CD14-positive monocyte (primary cell): ENCODE measurements at regions of chr5 and their contacts with region 1.

Region 1: GRCh38 chr5:134533115-134533815 is 7.8 kb downstream of the JADE2 start:
- DNase-seq: peak in 1 of 3 donors; percentile 35
- H3K4me3 ChIP-seq: no peak overlapping the region
- H3K4me3 Mint-ChIP-seq: peak overlapping the region in 1 of 2 donors; percentile 9
- H3K27ac ChIP-seq: peak overlapping the region in 1 of 2 donors; percentile 42
- H3K27ac Mint-ChIP-seq: peak overlapping the region in 5 of 7 donors; percentile 13 to 57 (median 51)
- H3K4me1 ChIP-seq: peaks cover 14 to 24% of the 10 kb centered on the region in 2 donors
- H3K4me1 Mint-ChIP-seq: peaks cover 33% of the 10 kb centered on the region
- H3K27me3 ChIP-seq: no peaks in the 10 kb centered on the region
- H3K27me3 Mint-ChIP-seq: peaks cover 0 to 5% (median 0%) of the 10 kb centered on the region in 3 donors
- CTCF ChIP-seq: no peak

Region 2: GRCh38 chr5:134503088-134503946 is 29.9 kb before region 1 on chr5:
- intact Hi-C with region 1: no loop called
- DNase-seq: peak; percentile 30 to 71 (median 64)
- H3K4me3 ChIP-seq: peak overlapping the region in 1 of 3 experiments; percentile 25
- H3K4me3 Mint-ChIP-seq: peak overlapping the region in 1 of 2 donors; percentile 53
- H3K27ac ChIP-seq: peak overlapping the region; percentile 10 to 60
- H3K27ac Mint-ChIP-seq: peak overlapping the region; percentile 32 to 84 (median 62)
- H3K4me1 ChIP-seq: peaks cover 16 to 22% of the 10 kb centered on the region in 2 donors
- H3K4me1 Mint-ChIP-seq: peaks cover 23% of the 10 kb centered on the region
- H3K27me3 ChIP-seq: no peaks in the 10 kb centered on the region
- H3K27me3 Mint-ChIP-seq: peaks cover 0 to 6% (median 1%) of the 10 kb centered on the region in 3 donors
- CTCF ChIP-seq: no peak

Region 3: GRCh38 chr5:134577796-134578363 is 44.6 kb after region 1 on chr5:
- intact Hi-C with region 1: loop called (anchors 5 kb)
- DNase-seq: peak; percentile 67 to 79 (median 72)
- H3K4me3 ChIP-seq: no peak overlapping the region
- H3K4me3 Mint-ChIP-seq: no peak overlapping the region
- H3K27ac ChIP-seq: no peak overlapping the region
- H3K27ac Mint-ChIP-seq: peak overlapping the region in 2 of 7 donors; percentile 13 to 46
- H3K4me1 ChIP-seq: no peaks in the 10 kb centered on the region
- H3K4me1 Mint-ChIP-seq: peaks cover 2% of the 10 kb centered on the region
- H3K27me3 ChIP-seq: no peaks in the 10 kb centered on the region
- H3K27me3 Mint-ChIP-seq: no peaks in the 10 kb centered on the region
- CTCF ChIP-seq: peak; percentile 91

Region 4: GRCh38 chr5:134637161-134637582 is 103.9 kb after region 1 on chr5:
- intact Hi-C with region 1: no loop called
- DNase-seq: no peak
- H3K4me3 ChIP-seq: no peak overlapping the region
- H3K4me3 Mint-ChIP-seq: no peak overlapping the region
- H3K27ac ChIP-seq: no peak overlapping the region
- H3K27ac Mint-ChIP-seq: no peak overlapping the region
- H3K4me1 ChIP-seq: peaks cover 1 to 5% of the 10 kb centered on the region in 2 donors
- H3K4me1 Mint-ChIP-seq: no peaks in the 10 kb centered on the region
- H3K27me3 ChIP-seq: no peaks in the 10 kb centered on the region
- H3K27me3 Mint-ChIP-seq: peaks cover 3 to 5% (median 3%) of the 10 kb centered on the region in 3 donors
- CTCF ChIP-seq: no peak